ENCODE measurements at regions of chr22 and their contacts with region 1.

Region 1: GRCh38 chr22:25110846-25111578 is 88.6 kb upstream of the CRYBB3 start:
- DNase-seq: peak; percentile 16 to 73 (median 62)
- ATAC-seq: peak; percentile 83
- H3K4me3 ChIP-seq: peak overlapping the region; percentile 87
- H3K4me3 Mint-ChIP-seq: peak overlapping the region; percentile 84 to 96 (median 92)
- H3K27ac ChIP-seq: peak overlapping the region; percentile 16
- H3K27ac Mint-ChIP-seq: peak overlapping the region; percentile 69 to 95 (median 86)
- H3K4me1 ChIP-seq: peaks cover 5 to 16% of the 10 kb centered on the region in 2 donors
- H3K4me1 Mint-ChIP-seq: peaks cover 13 to 43% (median 19%) of the 10 kb centered on the region in 7 donors
- H3K27me3 ChIP-seq: no peaks in the 10 kb centered on the region
- H3K27me3 Mint-ChIP-seq: no peaks in the 10 kb centered on the region

Region 2: GRCh38 chr22:24951942-24952836 is 158.8 kb before region 1 on chr22 and contains the start of gene KIAA1671:
- CTCF ChIA-PET with region 1: no interaction called
- POLR2A ChIA-PET with region 1: no interaction called
- intact Hi-C with region 1: loop called in 1 of 2 experiments (anchors 1 kb)
- DNase-seq: peak; percentile 78 to 95 (median 88)
- ATAC-seq: peak; percentile 96
- H3K4me3 ChIP-seq: peak within 1 kb of the TSS; percentile 86
- H3K4me3 Mint-ChIP-seq: peak within 1 kb of the TSS; percentile 64 to 88 (median 80)
- H3K27ac ChIP-seq: no peak within 1 kb of the TSS
- H3K27ac Mint-ChIP-seq: peak within 1 kb of the TSS in 5 of 9 donors; percentile 49 to 83 (median 65)
- H3K4me1 ChIP-seq: peaks cover 8 to 9% of the 10 kb centered on the region in 2 donors
- H3K4me1 Mint-ChIP-seq: peaks cover 4 to 32% (median 16%) of the 10 kb centered on the region in 7 donors
- H3K27me3 ChIP-seq: peaks cover 3% of the 10 kb centered on the region in 2 donors
- H3K27me3 Mint-ChIP-seq: peaks cover 48 to 74% (median 55%) of the 10 kb centered on the region in 5 donors
- total RNA-seq, gene KIAA1671: 2.8 to 19.0 (median 4.5) TPM

Region 3: GRCh38 chr22:25062386-25063085 is 48.5 kb before region 1 on chr22:
- CTCF ChIA-PET with region 1: interaction called, 11 read pairs
- POLR2A ChIA-PET with region 1: interaction called, 5 read pairs
- intact Hi-C with region 1: loop called (anchors 1 to 2 kb)
- DNase-seq: peak; percentile 37 to 90 (median 88)
- ATAC-seq: peak; percentile 95
- H3K4me3 ChIP-seq: peak overlapping the region; percentile 44
- H3K4me3 Mint-ChIP-seq: peak overlapping the region; percentile 74 to 88 (median 83)
- H3K27ac ChIP-seq: peak overlapping the region; percentile 70
- H3K27ac Mint-ChIP-seq: peak overlapping the region; percentile 90 to 99 (median 97)
- H3K4me1 ChIP-seq: peaks cover 41 to 50% of the 10 kb centered on the region in 2 donors
- H3K4me1 Mint-ChIP-seq: peaks cover 43 to 73% (median 68%) of the 10 kb centered on the region in 7 donors
- H3K27me3 ChIP-seq: no peaks in the 10 kb centered on the region
- H3K27me3 Mint-ChIP-seq: no peaks in the 10 kb centered on the region

Region 4: GRCh38 chr22:25067851-25068421 is 43.1 kb before region 1 on chr22:
- CTCF ChIA-PET with region 1: interaction called, 10 read pairs
- POLR2A ChIA-PET with region 1: interaction called, 13 read pairs
- intact Hi-C with region 1: loop called (anchors 1 to 2 kb)
- DNase-seq: peak; percentile 56 to 95 (median 92)
- ATAC-seq: peak; percentile 94
- H3K4me3 ChIP-seq: peak overlapping the region; percentile 43
- H3K4me3 Mint-ChIP-seq: peak overlapping the region; percentile 81 to 94 (median 87)
- H3K27ac ChIP-seq: peak overlapping the region; percentile 76
- H3K27ac Mint-ChIP-seq: peak overlapping the region; percentile 86 to 99 (median 98)
- H3K4me1 ChIP-seq: peaks cover 63 to 67% of the 10 kb centered on the region in 2 donors
- H3K4me1 Mint-ChIP-seq: peaks cover 51 to 96% (median 89%) of the 10 kb centered on the region in 7 donors
- H3K27me3 ChIP-seq: no peaks in the 10 kb centered on the region
- H3K27me3 Mint-ChIP-seq: no peaks in the 10 kb centered on the region

Region 5: DNA sequence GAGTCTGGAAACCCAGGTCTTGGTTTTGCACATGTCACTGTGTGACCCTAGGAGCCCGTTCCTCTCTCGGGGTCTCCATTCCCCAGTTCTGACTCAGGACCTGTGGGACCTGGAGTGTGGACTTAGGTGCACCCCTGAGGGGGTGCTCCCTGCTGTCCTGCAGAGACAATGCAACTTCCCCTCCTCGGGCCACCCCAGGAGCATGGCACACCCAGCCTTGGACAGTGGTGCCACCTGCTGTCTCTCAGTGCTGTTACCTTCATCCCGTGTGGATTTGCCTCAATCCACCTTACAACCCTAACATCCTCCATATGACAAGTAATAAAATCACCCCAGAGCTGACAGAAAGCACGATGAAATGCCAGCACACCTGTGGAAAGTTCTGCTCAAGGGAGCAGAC is 61.1 kb after region 1 on chr22:
- CTCF ChIA-PET with region 1: interaction called, 3 read pairs
- POLR2A ChIA-PET with region 1: interaction called, 3 read pairs
- intact Hi-C with region 1: loop called in 1 of 2 experiments (anchors 1 kb)
- DNase-seq: peak in 7 of 9 donors; percentile 8 to 40 (median 23)
- ATAC-seq: peak; percentile 58
- H3K4me3 ChIP-seq: no peak overlapping the region
- H3K4me3 Mint-ChIP-seq: no peak overlapping the region
- H3K27ac ChIP-seq: no peak overlapping the region
- H3K27ac Mint-ChIP-seq: peak overlapping the region in 1 of 9 donors; percentile 51
- H3K4me1 ChIP-seq: no peaks in the 10 kb centered on the region
- H3K4me1 Mint-ChIP-seq: no peaks in the 10 kb centered on the region
- H3K27me3 ChIP-seq: no peaks in the 10 kb centered on the region
- H3K27me3 Mint-ChIP-seq: no peaks in the 10 kb centered on the region

Measured in naive thymus-derived CD4-positive, alpha-beta T cell (primary cell).